Dorsolateral prefrontal cortex (tissue), 120 donors: ENCODE measurements at regions of chr1 and their contacts with region 1.

Region 1: GRCh38 chr1:58783993-58784757 is at the start of gene JUN:
- DNase-seq: peak; percentile 98 to 99 (median 99)
- H3K4me3 ChIP-seq: peak within 1 kb of the TSS; percentile 67 to 99 (median 91)
- H3K27ac ChIP-seq: peak within 1 kb of the TSS; percentile 95 to 100 (median 99)
- H3K27me3 ChIP-seq: no peaks in the 10 kb centered on the region
- CTCF ChIP-seq: peak in 26 of 56 donors; percentile 6 to 42 (median 21)
- total RNA-seq, gene JUN: 41.3 to 211 (median 70.6) TPM

Region 2: GRCh38 chr1:58816072-58816746 is 32.0 kb after region 1 on chr1:
- intact Hi-C with region 1: loop called (anchors 1 to 2 kb)
- DNase-seq: peak; percentile 73 to 90 (median 84)
- H3K4me3 ChIP-seq: peak overlapping the region; percentile 33 to 82 (median 68)
- H3K27ac ChIP-seq: peak overlapping the region; percentile 10 to 96 (median 85)
- H3K27me3 ChIP-seq: no peaks in the 10 kb centered on the region
- CTCF ChIP-seq: peak in 41 of 56 donors; percentile 7 to 61 (median 36)

Region 3: DNA sequence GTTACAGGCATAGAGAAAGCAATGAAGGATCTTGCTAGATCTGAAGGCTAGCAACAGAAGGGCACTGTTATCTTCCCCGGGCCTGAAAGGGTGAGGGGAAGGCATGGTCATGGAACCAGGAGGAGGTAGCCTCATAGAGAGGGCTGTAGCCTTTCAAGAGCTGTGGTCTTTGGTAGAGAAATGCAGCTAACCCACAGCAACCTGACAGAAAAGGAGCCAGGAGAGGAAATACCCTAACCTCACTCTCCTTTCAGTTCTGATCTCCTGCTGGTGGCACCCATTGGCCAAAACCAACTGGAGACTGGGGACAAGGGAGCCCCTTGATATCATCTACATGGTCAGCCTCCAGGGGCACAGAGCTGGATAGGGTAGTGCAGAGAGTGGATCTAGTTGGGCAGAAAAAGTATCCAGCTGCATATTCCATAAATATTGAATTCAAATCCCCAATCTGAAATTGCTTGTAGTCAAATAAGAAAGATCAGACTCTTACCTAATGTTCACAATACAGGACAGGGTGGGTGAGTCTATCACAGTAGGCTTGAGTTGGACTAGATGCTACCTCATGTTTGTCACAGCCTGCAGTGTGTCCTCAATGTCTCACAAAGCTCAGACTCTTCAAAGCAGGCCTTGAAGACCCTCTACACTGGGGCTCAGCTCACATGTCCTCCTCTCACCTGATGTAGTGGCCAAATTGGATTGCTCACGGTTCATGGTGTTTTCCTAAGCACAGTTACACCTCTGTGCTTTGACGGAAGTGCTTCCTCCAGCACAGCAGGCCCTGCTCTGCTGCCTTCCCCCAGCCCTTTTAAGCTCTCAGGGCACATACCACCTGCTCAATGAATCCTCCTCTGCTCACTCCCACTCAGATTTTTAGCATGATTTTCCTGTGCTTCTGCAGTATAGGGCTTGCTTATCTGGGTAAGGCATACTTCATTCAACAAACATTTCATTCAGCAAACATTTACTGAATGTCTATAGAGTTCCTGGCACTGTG is 73.8 kb after region 1 on chr1:
- intact Hi-C with region 1: loop called in 1 of 2 experiments (anchors 5 kb)
- DNase-seq: no peak
- H3K4me3 ChIP-seq: no peak overlapping the region
- H3K27ac ChIP-seq: peak overlapping the region in 12 of 59 donors; percentile 1 to 67 (median 12)
- H3K27me3 ChIP-seq: no peaks in the 10 kb centered on the region
- CTCF ChIP-seq: no peak

Region 4: GRCh38 chr1:58884706-58885661 is 100.8 kb after region 1 on chr1:
- intact Hi-C with region 1: no loop called
- DNase-seq: no peak
- H3K4me3 ChIP-seq: no peak overlapping the region
- H3K27ac ChIP-seq: peak overlapping the region in 45 of 59 donors; percentile 3 to 91 (median 80)
- H3K27me3 ChIP-seq: no peaks in the 10 kb centered on the region
- CTCF ChIP-seq: no peak

Region 5: DNA sequence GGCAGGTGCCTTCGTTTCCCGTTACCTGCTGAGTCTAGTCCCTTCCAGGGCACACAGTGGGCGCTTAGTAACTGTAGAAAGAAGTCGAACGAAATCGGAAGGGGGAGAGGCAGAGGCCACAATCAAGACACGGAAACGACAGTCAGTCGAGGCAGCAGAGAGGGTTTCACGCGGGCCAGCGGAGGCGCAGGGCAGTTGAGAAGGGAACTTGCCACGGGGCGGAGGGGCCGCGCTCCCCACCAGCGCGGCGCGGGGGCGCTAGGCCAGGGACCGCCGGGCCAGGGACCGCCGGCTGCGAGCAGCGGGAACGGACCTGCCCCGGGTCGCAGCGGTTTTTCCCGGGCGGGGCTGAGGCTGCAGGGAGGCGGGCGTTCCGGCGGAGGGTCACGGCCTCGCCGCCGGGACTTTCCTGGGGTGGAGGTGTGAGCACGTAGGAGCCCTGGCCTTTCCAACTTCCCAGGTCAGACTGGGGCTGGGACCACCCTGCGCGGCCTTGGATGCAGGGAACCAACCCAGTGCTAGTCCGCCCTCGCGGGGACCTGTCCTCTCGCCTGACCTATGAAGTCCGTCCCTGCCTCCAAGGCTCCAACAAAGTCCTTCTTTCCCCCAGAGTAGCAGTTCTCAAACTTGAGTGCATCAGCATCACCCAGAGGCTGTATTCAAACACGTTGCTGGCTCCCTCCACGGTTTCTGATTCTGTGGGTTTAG is 362.6 kb after region 1 on chr1:
- intact Hi-C with region 1: loop called in 1 of 2 experiments (anchors 10 kb)
- DNase-seq: peak in 3 of 10 donors; percentile 35 to 54 (median 40)
- H3K4me3 ChIP-seq: peak overlapping the region; percentile 25 to 70 (median 55)
- H3K27ac ChIP-seq: peak overlapping the region in 22 of 59 donors; percentile 1 to 80 (median 46)
- H3K27me3 ChIP-seq: peaks cover 0 to 20% (median 0%) of the 10 kb centered on the region in 45 donors
- CTCF ChIP-seq: peak in 10 of 56 donors; percentile 11 to 30 (median 18)

Region 6: GRCh38 chr1:59699227-59699847 is 915.2 kb after region 1 on chr1:
- intact Hi-C with region 1: loop called (anchors 5 kb)
- DNase-seq: peak in 1 of 10 donors; percentile 22
- H3K4me3 ChIP-seq: no peak overlapping the region
- H3K27ac ChIP-seq: peak overlapping the region in 1 of 59 donors; percentile 2
- H3K27me3 ChIP-seq: no peaks in the 10 kb centered on the region
- CTCF ChIP-seq: peak; percentile 89 to 98 (median 95)

Region 7: GRCh38 chr1:59759156-59759925 is 975.2 kb after region 1 on chr1:
- intact Hi-C with region 1: loop called (anchors 5 to 10 kb)
- DNase-seq: peak; percentile 62 to 88 (median 82)
- H3K4me3 ChIP-seq: peak overlapping the region in 45 of 59 donors; percentile 3 to 59 (median 35)
- H3K27ac ChIP-seq: peak overlapping the region in 9 of 59 donors; percentile 8 to 59 (median 30)
- H3K27me3 ChIP-seq: no peaks in the 10 kb centered on the region
- CTCF ChIP-seq: peak; percentile 68 to 100 (median 96)